Activated naive CD8-positive, alpha-beta T cell treated with anti-CD3 and anti-CD28 coated beads, Interleukin-2, amount 10 ng/mL, durations not matched to agents 7 days and 5 days (primary cell): ENCODE measurements at regions of chr22 and their contacts with region 1.

Region 1: DNA sequence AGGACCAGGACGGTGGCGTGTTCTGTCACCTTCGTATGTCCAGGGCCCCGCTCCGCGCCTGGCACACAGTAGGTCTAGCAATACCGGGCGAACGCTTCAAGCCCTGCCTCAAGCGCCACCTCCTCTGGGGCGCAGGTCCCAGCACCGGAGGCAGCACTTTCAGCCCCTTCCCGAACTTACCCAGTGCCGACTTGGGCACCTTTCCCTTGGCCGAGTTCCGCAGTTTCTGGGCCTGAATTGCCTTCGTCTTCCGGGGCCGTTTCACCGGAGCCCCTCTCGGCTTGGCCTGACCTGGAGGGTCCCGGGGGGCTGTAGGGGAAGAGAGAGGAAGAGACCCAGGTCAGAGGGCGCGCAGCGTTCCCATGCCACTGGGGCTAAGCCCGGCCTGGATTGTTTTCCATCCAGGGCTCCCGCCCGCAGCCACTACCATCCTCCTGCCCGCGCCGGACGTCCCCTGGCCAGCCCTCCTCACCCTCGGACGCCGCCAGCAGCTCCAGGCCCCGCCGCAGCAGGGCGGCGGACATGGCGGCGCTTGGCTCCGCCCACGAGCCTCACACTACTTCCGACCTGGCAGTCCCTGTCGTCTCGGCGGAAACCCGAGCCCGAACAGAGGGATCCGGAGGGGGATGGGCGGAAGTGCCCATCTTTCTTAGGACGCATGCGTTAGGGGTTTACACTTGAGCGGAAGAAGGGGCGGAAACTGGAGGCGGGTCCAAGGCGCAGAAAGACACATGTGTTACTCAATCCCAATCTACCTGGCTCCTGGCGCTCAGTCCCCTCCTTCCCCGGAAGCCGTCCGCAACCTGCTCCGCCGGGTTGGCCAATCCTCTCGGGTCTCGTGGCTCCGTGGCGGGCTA is at the start of gene RPS19BP1:
- DNase-seq: peak; percentile 97
- ATAC-seq: peak; percentile 85
- H3K4me3 Mint-ChIP-seq: peak within 1 kb of the TSS; percentile 93
- H3K27ac Mint-ChIP-seq: peak within 1 kb of the TSS; percentile 97
- H3K4me1 Mint-ChIP-seq: peaks cover 43% of the 10 kb centered on the region
- H3K27me3 Mint-ChIP-seq: no peaks in the 10 kb centered on the region
- total RNA-seq, gene RPS19BP1: 66.5 to 71.4 TPM

Region 2: GRCh38 chr22:39395936-39396796 is 136.3 kb before region 1 on chr22:
- POLR2A ChIA-PET with region 1: interaction called, 10 read pairs
- DNase-seq: no peak
- ATAC-seq: no peak
- H3K4me3 Mint-ChIP-seq: no peak overlapping the region
- H3K27ac Mint-ChIP-seq: no peak overlapping the region
- H3K4me1 Mint-ChIP-seq: peaks cover 5% of the 10 kb centered on the region
- H3K27me3 Mint-ChIP-seq: no peaks in the 10 kb centered on the region

Region 3: DNA sequence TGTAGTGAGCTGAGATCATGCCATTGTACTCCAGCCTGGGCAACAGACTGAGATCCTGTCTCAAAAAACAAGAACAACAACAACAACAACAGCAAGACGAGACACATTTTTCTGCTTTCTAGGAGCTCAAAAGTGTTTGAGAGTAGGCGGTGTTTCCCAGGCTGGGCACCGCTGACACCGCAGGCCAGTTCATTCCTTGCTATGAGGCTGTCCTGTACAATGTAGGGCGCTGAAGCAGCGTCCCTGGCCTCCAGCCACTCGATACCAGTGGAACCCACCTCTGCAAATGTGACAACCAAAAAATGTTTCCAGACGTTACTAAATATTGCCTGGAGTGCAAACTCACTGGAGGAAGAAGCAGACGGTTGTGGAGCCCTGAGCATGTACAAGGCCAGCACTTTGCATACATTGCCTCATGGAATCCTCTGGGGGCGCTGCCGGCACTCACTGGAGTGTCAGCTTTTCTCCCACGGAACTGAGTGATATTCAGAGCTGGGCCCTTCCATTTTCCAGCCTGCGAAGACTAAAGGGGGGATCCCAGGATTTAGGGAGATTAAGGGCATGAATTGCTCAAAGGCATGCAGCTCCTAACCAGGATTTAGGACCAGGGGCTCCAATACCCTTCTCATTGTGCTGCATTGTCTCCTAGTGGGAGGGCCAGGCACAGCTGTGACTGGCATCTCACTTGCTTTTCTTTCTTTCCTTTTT is 36.2 kb before region 1 on chr22:
- POLR2A ChIA-PET with region 1: interaction called, 40 read pairs
- DNase-seq: peak; percentile 64
- ATAC-seq: peak; percentile 64
- H3K4me3 Mint-ChIP-seq: no peak overlapping the region
- H3K27ac Mint-ChIP-seq: no peak overlapping the region
- H3K4me1 Mint-ChIP-seq: peaks cover 16% of the 10 kb centered on the region
- H3K27me3 Mint-ChIP-seq: peaks cover 4% of the 10 kb centered on the region